Aorta (tissue), 5 donors: ENCODE measurements at regions of chr1 and their contacts with region 1.

Region 1: DNA sequence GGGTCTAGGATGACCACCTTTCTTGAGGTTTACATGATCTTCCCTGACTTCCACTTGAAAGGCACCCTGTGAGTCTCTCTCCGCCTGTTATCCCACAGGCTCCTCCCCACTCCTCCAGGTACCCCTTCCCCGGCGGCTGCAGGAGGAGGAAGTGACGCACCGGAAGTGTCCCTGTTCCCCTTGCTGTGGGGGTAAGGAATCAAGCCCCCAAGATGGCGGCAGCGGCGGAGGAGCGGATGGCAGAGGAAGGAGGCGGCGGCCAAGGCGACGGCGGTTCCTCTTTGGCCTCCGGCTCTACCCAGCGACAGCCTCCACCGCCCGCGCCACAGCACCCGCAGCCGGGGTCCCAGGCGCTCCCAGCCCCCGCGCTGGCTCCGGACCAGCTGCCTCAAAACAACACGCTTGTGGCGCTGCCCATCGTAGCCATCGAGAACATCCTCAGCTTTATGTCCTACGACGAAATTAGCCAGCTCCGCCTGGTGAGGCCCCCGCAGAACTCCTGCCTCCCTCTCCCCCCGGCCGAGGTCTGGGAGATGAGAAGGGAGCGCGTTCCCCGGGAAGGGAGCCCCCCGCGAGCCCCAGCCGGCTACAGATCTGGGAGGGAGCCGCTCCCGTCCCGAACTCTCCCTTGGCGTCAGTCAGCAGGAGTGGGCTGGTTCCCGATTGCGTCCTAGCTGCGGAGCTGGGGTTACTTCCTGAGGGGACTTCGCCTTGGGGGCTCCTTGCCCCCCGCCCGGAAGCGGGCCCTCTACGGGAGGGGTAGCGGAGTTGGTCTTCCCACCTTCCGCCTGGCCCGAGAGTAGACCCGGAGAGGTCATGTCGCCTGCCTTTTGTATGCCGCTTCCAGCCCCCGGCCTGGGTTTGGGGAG is at the start of gene FBXO28:
- DNase-seq: peak; percentile 98
- ATAC-seq: peak; percentile 98
- H3K4me3 ChIP-seq: peak within 1 kb of the TSS; percentile 88 to 93
- H3K27ac ChIP-seq: peak within 1 kb of the TSS; percentile 78 to 89
- H3K4me1 ChIP-seq: no peaks in the 10 kb centered on the region
- H3K27me3 ChIP-seq: no peaks in the 10 kb centered on the region
- total RNA-seq, gene FBXO28: 26.7 to 27.4 TPM

Region 2: GRCh38 chr1:224182866-224183590 is 68.9 kb after region 1 on chr1 and contains the start of gene DEGS1:
- intact Hi-C with region 1: loop called in 1 of 2 experiments (anchors 5 kb)
- DNase-seq: peak; percentile 86 to 93
- ATAC-seq: peak; percentile 96
- H3K4me3 ChIP-seq: peak within 1 kb of the TSS; percentile 78 to 96
- H3K27ac ChIP-seq: peak within 1 kb of the TSS; percentile 88 to 96
- H3K4me1 ChIP-seq: no peaks in the 10 kb centered on the region
- H3K27me3 ChIP-seq: no peaks in the 10 kb centered on the region
- total RNA-seq, gene DEGS1: 75.1 to 77.5 TPM

Region 3: GRCh38 chr1:224329842-224330753 is 215.9 kb after region 1 on chr1 and contains the start of gene NVL:
- intact Hi-C with region 1: loop called (anchors 2 to 5 kb)
- DNase-seq: peak; percentile 89 to 93
- ATAC-seq: peak; percentile 96
- H3K4me3 ChIP-seq: peak within 1 kb of the TSS; percentile 82 to 99
- H3K27ac ChIP-seq: peak within 1 kb of the TSS; percentile 50 to 95
- H3K4me1 ChIP-seq: no peaks in the 10 kb centered on the region
- H3K27me3 ChIP-seq: no peaks in the 10 kb centered on the region
- total RNA-seq, gene NVL: 19.8 to 27.9 TPM

Region 4: DNA sequence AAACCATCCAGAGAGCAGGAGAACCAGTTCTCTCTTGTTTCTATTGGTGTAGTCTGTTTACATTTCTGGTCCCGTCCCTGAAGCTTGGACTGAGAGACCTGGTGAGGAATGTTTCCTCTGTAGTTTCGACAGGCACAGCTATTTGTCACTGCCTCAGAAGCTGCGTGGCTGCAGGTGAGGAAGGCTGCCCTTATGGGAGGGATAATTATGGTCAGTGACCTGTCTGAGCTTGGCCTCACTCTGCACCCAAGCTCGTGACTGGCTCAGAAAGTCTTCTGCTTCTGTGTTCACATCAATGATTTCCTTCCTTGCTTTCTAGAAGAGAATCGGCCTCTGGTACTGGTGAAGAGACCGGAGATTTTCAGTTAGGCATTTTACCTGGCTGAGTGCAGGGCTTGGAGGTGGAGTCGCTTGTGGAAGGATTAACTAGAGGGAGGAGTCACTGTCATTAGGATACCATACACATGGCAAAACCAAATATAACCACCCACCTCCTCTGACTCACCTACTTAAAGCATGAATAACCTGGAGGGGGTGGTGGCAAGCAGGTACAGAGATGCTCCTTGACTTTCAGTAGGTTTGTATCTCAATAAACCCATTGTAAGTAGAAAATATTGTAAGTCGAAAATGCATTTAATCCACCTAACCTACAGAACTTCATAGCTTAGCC is 340.4 kb after region 1 on chr1:
- intact Hi-C with region 1: loop called (anchors 2 to 10 kb)
- DNase-seq: no peak
- ATAC-seq: no peak
- H3K4me3 ChIP-seq: no peak overlapping the region
- H3K27ac ChIP-seq: no peak overlapping the region
- H3K4me1 ChIP-seq: no peaks in the 10 kb centered on the region
- H3K27me3 ChIP-seq: no peaks in the 10 kb centered on the region